ENCODE measurements at regions of chr2 and their contacts with region 1.

Region 1: GRCh38 chr2:74458132-74458925 is at the start of gene WBP1:
- DNase-seq: peak; percentile 100
- ATAC-seq: peak; percentile 79
- H3K4me3 ChIP-seq: peak within 1 kb of the TSS; percentile 80 to 100 (median 93)
- H3K4me3 Mint-ChIP-seq: peak within 1 kb of the TSS; percentile 94
- H3K27ac ChIP-seq: peak within 1 kb of the TSS; percentile 97 to 100
- H3K27ac Mint-ChIP-seq: peak within 1 kb of the TSS; percentile 99
- H3K4me1 ChIP-seq: peaks cover 33 to 40% of the 10 kb centered on the region in 2 donors
- H3K4me1 Mint-ChIP-seq: peaks cover 56% of the 10 kb centered on the region
- H3K27me3 ChIP-seq: no peaks in the 10 kb centered on the region
- H3K27me3 Mint-ChIP-seq: no peaks in the 10 kb centered on the region
- CTCF ChIP-seq: no peak
- total RNA-seq, gene WBP1: 91.5 and 98.4 TPM in 2 replicates

Region 2: GRCh38 chr2:74414881-74415761 is 43.2 kb before region 1 on chr2:
- CTCF ChIA-PET with region 1: interaction called, 4 read pairs
- POLR2A ChIA-PET with region 1: interaction called, 19 read pairs
- intact Hi-C with region 1: loop called (anchors 1 kb)
- DNase-seq: peak; percentile 66
- ATAC-seq: peak; percentile 81
- H3K4me3 ChIP-seq: peak overlapping the region; percentile 16 to 67 (median 62)
- H3K4me3 Mint-ChIP-seq: peak overlapping the region; percentile 84
- H3K27ac ChIP-seq: peak overlapping the region; percentile 34 to 67
- H3K27ac Mint-ChIP-seq: peak overlapping the region; percentile 83
- H3K4me1 ChIP-seq: peaks cover 38 to 53% of the 10 kb centered on the region in 2 donors
- H3K4me1 Mint-ChIP-seq: peaks cover 45% of the 10 kb centered on the region
- H3K27me3 ChIP-seq: no peaks in the 10 kb centered on the region
- H3K27me3 Mint-ChIP-seq: no peaks in the 10 kb centered on the region
- CTCF ChIP-seq: peak; percentile 25

Region 3: DNA sequence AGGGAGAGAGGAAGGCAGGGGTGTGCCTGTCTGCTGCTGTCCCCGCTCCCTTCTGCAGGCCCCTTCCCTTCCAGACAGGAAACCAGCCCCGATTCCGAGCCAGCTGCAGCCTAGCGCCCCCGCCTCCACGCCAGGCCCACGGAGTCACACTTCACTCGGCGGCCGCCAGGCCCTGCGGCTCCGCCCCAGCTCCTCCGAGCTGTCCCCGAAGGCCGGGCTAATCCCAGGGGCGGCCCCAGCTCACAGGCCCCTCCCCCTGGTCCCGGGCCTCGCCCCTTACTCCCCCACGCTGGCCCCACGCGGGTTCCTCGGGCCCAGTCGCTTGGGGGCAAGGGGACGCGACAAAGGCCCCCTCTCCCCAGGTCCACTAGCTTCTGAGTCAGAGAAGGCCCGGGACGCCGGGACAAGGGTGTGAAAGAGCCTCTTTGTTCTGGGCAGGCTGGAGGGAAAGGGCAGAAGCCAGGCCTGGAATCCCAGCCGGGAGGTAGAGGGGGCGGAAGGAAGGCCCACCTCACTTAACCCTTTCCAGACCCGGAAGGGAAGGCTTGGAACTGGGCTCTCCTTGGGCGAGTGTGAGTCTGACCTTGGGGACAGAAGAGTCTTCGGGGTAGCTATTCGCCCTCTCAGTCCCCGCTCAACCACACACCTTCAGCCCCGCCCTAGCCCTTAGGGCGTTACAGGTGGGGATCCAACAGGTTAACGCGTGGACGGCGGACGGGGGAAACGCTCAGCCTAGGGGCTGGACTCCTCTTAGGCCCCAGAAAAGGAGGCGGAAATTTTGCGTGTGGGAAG is 17.8 kb before region 1 on chr2:
- CTCF ChIA-PET with region 1: interaction called, 3 read pairs
- POLR2A ChIA-PET with region 1: interaction called, 7 read pairs
- intact Hi-C with region 1: loop called (anchors 1 kb)
- DNase-seq: peak; percentile 78
- ATAC-seq: peak; percentile 96
- H3K4me3 ChIP-seq: peak overlapping the region; percentile 14 to 55 (median 49)
- H3K4me3 Mint-ChIP-seq: peak overlapping the region; percentile 83
- H3K27ac ChIP-seq: no peak overlapping the region
- H3K27ac Mint-ChIP-seq: peak overlapping the region; percentile 67
- H3K4me1 ChIP-seq: peaks cover 36 to 46% of the 10 kb centered on the region in 2 donors
- H3K4me1 Mint-ChIP-seq: peaks cover 47% of the 10 kb centered on the region
- H3K27me3 ChIP-seq: peaks cover 0 to 43% (median 13%) of the 10 kb centered on the region in 4 experiments
- H3K27me3 Mint-ChIP-seq: peaks cover 17% of the 10 kb centered on the region
- CTCF ChIP-seq: peak; percentile 26

Region 4: DNA sequence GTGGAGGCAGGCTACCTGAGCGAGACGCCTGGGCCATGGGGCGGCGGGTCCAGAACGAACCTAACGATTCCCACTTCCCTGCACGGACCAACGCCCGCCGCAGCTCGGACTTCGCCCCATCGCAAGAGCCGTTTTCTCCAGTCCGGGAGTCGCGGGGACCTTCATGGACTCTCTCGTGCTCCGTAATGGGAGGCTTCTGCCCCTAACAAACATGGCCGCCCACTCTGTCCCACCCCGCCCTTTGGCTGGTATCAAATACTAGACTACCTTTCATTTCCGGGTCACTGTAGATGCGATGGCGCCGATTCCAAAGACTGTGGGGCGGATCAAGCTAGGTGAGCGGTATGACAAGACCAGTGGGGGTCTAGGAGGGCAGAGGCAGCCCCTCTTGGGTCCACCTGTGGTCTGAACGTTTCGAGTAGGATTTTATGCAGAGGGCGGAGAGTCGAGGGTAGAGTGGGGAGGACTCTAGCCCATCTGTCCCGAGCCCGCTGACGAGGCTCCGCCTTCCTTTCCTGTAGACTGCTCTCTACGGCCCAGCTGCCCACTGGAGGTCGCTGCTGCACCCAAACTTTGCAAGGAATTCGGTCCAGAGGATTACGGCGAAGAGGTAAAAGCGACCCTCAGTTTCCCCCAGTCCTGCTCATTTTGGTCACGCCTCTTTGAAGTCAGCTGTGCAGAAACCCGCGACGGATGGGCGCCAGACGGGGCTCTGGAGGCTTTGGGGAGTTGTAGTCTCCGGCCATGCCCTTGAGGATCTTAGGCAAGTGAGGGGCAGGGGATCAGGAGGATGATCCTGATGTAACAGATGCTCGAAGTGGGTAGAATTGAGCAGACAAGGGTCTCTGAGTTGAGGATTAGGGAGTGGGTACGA is 24.7 kb after region 1 on chr2 and contains the starts of genes CCDC142 and TTC31:
- CTCF ChIA-PET with region 1: interaction called, 54 read pairs
- POLR2A ChIA-PET with region 1: interaction called, 56 read pairs
- intact Hi-C with region 1: loop called (anchors 1 kb)
- DNase-seq: peak; percentile 97
- ATAC-seq: peak; percentile 90
- H3K4me3 ChIP-seq: peak within 1 kb of the TSS; percentile 74 to 96 (median 88)
- H3K4me3 Mint-ChIP-seq: peak within 1 kb of the TSS; percentile 100
- H3K27ac ChIP-seq: peak within 1 kb of the TSS; percentile 71 to 84
- H3K27ac Mint-ChIP-seq: peak within 1 kb of the TSS; percentile 99
- H3K4me1 ChIP-seq: peaks cover 21 to 29% of the 10 kb centered on the region in 2 donors
- H3K4me1 Mint-ChIP-seq: peaks cover 34% of the 10 kb centered on the region
- H3K27me3 ChIP-seq: no peaks in the 10 kb centered on the region
- H3K27me3 Mint-ChIP-seq: no peaks in the 10 kb centered on the region
- CTCF ChIP-seq: peak; percentile 90
- total RNA-seq, gene CCDC142: 61.6 and 69.3 TPM in 2 replicates
- total RNA-seq, gene TTC31: 69.4 and 72.3 TPM in 2 replicates

Region 5: DNA sequence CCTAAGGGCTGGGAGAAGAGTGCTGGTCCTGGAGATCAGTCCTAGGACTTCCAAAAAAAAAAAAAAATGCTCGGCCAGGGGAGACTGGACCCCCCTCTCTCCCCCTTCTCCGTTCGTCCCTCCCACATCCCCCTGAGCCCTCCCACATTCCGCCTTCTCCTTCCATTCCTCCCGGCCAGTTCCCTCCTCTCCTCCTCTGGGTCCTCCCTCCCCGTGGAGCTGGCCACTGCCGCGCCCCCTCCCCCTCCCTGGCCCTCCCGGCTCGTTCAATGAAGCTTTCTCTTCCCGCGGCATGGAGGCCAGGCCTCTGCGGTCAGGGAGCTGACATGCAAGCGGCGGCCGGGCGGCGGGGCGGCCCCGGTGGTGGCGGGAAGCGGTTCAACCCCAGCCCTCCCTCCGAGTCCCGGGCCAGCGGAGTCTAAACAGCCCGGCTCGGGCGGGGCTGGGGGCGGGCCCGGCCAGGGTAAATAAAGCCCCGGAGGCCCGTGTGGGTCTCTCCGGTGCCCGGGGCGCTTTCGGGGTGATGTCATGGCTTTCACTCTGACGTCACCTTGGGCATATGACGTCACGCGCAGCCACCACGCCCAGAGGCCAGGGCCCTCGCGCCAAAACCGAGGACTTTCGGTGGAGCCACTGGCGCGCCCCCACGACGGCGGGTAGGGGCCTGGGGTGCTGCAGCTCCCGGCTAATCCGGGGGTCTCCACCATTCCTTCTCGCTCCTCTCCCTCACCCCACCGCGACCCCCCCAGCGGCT is 95.7 kb after region 1 on chr2 and contains the start of gene LOXL3:
- CTCF ChIA-PET with region 1: no interaction called
- POLR2A ChIA-PET with region 1: no interaction called
- intact Hi-C with region 1: loop called (anchors 1 kb)
- DNase-seq: peak; percentile 93
- ATAC-seq: peak; percentile 48
- H3K4me3 ChIP-seq: peak within 1 kb of the TSS; percentile 51 to 99 (median 84)
- H3K4me3 Mint-ChIP-seq: peak within 1 kb of the TSS; percentile 96
- H3K27ac ChIP-seq: peak within 1 kb of the TSS; percentile 64 to 76
- H3K27ac Mint-ChIP-seq: peak within 1 kb of the TSS; percentile 94
- H3K4me1 ChIP-seq: peaks cover 16 to 39% of the 10 kb centered on the region in 2 donors
- H3K4me1 Mint-ChIP-seq: peaks cover 24% of the 10 kb centered on the region
- H3K27me3 ChIP-seq: peaks cover 0 to 15% (median 8%) of the 10 kb centered on the region in 4 experiments
- H3K27me3 Mint-ChIP-seq: no peaks in the 10 kb centered on the region
- CTCF ChIP-seq: no peak
- total RNA-seq, gene LOXL3: 0.66 and 1.2 TPM in 2 replicates

Measured in B cell (primary cell).